Activated CD4-positive, alpha-beta T cell treated with anti-CD3 and anti-CD28 coated beads for 36 hours (primary cell): ENCODE measurements at regions of chr15 and their contacts with region 1.

Region 1: DNA sequence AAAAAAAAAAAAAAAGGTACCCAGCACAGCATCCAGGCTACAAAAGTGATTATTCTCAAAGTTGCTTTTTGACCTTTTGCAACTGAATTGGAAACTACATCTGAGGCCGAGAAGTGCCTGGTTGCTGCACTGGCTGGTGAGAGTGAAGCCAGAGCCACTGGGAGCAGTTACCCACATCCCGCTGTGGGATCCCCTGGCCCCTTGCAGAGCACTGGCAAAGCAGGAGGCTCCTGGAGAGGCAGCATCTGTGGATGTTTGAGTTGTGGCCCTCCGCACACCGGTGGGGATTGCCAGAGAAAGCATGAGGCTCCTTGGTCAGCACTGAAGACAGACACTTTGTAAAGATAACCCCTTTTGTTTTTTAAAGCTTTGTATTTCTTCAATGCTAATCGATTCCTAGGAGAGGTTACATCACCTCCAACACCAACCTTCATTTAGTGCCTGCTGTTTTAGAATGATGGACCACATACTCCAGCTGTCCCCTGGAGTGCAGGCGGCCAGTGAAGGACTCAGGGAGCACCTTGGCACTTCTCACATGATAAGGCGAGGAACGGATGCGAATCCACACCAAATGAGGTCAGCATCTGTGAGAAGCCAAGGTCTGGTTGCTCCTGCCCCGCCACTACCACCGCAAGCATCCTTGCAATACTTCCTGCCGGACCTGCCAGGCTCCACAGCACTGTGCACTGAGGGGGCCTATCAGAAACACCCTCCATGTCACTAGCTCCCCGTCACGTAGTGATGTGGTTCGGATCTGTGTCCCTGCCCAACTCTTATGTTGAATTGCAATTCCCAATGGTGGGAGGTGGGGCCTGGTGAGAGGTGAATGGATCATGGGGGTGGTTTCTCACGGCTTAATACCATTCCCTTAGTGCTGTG is 256.5 kb downstream of the GABRB3 start:
- DNase-seq: no peak
- ATAC-seq: no peak
- H3K4me3 Mint-ChIP-seq: no peak overlapping the region
- H3K27ac Mint-ChIP-seq: no peak overlapping the region
- H3K4me1 Mint-ChIP-seq: no peaks in the 10 kb centered on the region
- H3K27me3 Mint-ChIP-seq: no peaks in the 10 kb centered on the region

Region 2: DNA sequence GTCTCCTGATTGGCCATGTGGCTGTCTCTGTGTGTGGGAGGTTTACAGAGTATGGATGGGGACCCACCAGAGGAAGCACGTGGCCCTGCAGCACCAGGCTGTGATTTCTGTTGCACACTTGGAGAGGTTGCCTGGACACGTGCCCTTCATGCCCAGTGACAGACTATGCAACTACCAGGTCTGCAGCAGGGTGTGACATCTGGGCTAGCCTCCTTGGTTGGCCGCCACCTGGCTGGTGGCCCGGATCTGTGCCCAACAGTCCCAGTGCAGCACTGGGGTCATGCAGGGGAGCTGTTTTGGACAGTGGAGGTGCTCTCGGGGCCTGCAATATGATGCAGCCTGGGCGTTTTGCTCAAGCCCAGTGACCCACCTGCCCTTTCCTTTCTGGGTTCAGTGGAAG is 1290.0 kb before region 1 on chr15:
- CTCF ChIA-PET with region 1: no interaction called
- POLR2A ChIA-PET with region 1: no interaction called
- intact Hi-C with region 1: no loop called
- DNase-seq: no peak
- ATAC-seq: no peak
- H3K4me3 Mint-ChIP-seq: no peak overlapping the region
- H3K27ac Mint-ChIP-seq: no peak overlapping the region
- H3K4me1 Mint-ChIP-seq: no peaks in the 10 kb centered on the region
- H3K27me3 Mint-ChIP-seq: no peaks in the 10 kb centered on the region

Region 3: GRCh38 chr15:26475554-26475953 is 40.8 kb before region 1 on chr15:
- CTCF ChIA-PET with region 1: no interaction called
- POLR2A ChIA-PET with region 1: no interaction called
- intact Hi-C with region 1: no loop called
- DNase-seq: no peak
- ATAC-seq: no peak
- H3K4me3 Mint-ChIP-seq: no peak overlapping the region
- H3K27ac Mint-ChIP-seq: no peak overlapping the region
- H3K4me1 Mint-ChIP-seq: no peaks in the 10 kb centered on the region
- H3K27me3 Mint-ChIP-seq: no peaks in the 10 kb centered on the region

Region 4: GRCh38 chr15:26537663-26538062 is 21.3 kb after region 1 on chr15:
- CTCF ChIA-PET with region 1: no interaction called
- POLR2A ChIA-PET with region 1: no interaction called
- intact Hi-C with region 1: no loop called
- DNase-seq: no peak
- ATAC-seq: no peak
- H3K4me3 Mint-ChIP-seq: no peak overlapping the region
- H3K27ac Mint-ChIP-seq: no peak overlapping the region
- H3K4me1 Mint-ChIP-seq: no peaks in the 10 kb centered on the region
- H3K27me3 Mint-ChIP-seq: no peaks in the 10 kb centered on the region

Region 5: DNA sequence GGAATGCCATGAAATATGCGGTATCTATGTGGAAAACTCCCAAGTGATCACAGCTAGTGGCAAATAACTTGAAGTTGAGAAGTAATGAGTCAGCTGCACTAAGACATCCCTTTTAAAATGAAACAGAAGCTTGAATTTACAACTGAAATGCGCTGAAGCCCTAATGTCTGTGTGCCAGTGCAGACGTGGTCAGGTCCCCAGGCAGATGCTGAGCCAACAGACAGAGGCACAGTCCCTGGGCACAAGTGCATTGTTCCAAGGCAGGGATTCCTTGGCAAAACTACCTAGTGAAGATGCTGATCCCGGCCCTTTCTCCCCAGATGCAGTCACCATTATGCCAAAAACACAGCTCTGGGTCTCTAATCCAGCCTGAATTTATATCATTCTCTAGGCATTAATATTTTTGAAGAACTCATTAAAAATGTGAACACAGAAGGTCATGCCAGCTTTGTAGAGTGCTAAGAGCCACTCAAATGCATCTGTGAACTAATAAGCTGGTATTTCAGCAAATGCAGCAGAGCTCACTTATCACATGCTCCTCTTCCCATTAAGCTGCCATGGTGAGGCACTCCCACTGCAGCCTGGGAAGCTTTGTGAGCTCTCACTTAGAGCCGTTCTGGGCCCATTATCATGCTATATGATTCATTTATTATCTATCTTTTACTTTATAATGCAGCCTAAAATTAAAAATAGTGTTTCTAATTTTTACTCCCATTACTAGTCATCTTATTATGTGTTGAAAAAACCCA is 56.4 kb after region 1 on chr15:
- CTCF ChIA-PET with region 1: no interaction called
- POLR2A ChIA-PET with region 1: no interaction called
- intact Hi-C with region 1: loop called in 1 of 2 experiments (anchors 10 kb)
- DNase-seq: no peak
- ATAC-seq: no peak
- H3K4me3 Mint-ChIP-seq: no peak overlapping the region
- H3K27ac Mint-ChIP-seq: no peak overlapping the region
- H3K4me1 Mint-ChIP-seq: no peaks in the 10 kb centered on the region
- H3K27me3 Mint-ChIP-seq: no peaks in the 10 kb centered on the region